Activated CD4-positive, alpha-beta T cell treated with anti-CD3 and anti-CD28 coated beads, Interleukin-2, amount 10 ng/mL, durations not matched to agents 7 days and 5 days (primary cell): ENCODE measurements at regions of chr2 and their contacts with region 1.

Region 1: DNA sequence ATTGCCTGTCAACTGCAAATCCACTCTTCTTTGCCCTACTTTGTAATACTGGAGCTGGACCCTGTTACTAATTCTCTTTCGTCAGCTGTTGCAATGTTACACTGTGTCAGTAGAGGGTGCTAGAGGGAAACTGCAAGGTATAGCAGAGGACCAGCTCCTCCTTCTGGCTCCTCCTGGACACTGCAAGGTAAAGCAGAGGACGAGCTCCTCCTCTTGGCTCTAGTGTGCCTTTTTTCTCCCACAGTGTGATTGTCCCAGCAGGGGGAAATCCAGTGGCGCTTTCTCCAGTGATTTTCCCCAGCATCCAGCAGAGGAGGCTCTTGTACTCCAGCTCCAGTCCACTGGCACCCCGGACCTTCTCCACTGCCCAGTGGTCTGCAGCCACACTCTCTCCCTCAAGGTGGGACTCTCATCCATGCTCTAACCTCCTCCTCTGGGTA is 95.6 kb downstream of the CAPN13 start:
- DNase-seq: peak; percentile 93
- H3K4me3 Mint-ChIP-seq: no peak overlapping the region
- H3K27ac Mint-ChIP-seq: no peak overlapping the region
- H3K4me1 Mint-ChIP-seq: peaks cover 6% of the 10 kb centered on the region
- H3K27me3 Mint-ChIP-seq: no peaks in the 10 kb centered on the region

Region 2: GRCh38 chr2:30146438-30147147 is 565.1 kb before region 1 on chr2 and contains the start of gene YPEL5:
- CTCF ChIA-PET with region 1: interaction called, 37 read pairs
- POLR2A ChIA-PET with region 1: no interaction called
- DNase-seq: peak; percentile 99
- H3K4me3 Mint-ChIP-seq: peak within 1 kb of the TSS; percentile 81
- H3K27ac Mint-ChIP-seq: peak within 1 kb of the TSS; percentile 99
- H3K4me1 Mint-ChIP-seq: peaks cover 44% of the 10 kb centered on the region
- H3K27me3 Mint-ChIP-seq: no peaks in the 10 kb centered on the region
- total RNA-seq, gene YPEL5: 32.3 to 39.2 TPM

Region 3: GRCh38 chr2:30180226-30180625 is 531.4 kb before region 1 on chr2:
- CTCF ChIA-PET with region 1: interaction called, 10 read pairs
- POLR2A ChIA-PET with region 1: no interaction called
- DNase-seq: no peak
- H3K4me3 Mint-ChIP-seq: no peak overlapping the region
- H3K27ac Mint-ChIP-seq: no peak overlapping the region
- H3K4me1 Mint-ChIP-seq: peaks cover 2% of the 10 kb centered on the region
- H3K27me3 Mint-ChIP-seq: no peaks in the 10 kb centered on the region

Region 4: DNA sequence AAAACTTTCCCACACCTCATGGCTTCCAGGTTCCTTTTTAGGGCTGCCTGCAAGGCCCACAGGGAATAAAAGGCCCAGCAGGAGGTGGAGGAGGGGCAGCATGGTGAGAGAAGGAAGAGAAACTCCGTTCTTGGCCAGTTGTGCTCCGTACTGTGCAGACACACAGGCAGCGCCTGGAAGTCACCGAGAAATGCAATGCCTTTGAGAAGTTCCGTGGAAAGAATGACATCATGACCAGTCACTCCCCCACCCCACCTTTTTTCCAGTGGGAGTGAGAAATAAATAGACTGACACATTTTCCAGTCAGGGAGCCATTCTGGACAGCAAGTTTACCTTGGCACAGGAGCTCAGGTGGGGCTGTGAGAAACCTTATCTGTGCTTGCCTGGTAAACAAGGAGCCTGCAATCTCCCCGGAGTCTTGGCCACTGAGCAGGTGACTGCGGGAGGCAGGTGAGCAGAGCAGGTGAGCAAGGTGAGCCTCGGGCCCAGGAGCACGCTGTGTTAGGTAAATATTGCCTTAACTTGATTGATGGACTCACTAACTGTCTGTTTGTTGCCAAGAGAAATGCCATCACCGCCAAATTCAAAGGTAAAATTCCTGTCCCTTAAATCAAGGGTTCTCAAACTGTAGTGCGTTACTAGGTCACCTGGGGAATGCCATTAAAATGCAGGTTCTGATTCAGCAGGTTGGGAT is 493.9 kb before region 1 on chr2:
- CTCF ChIA-PET with region 1: interaction called, 31 read pairs
- POLR2A ChIA-PET with region 1: no interaction called
- DNase-seq: no peak
- H3K4me3 Mint-ChIP-seq: no peak overlapping the region
- H3K27ac Mint-ChIP-seq: no peak overlapping the region
- H3K4me1 Mint-ChIP-seq: peaks cover 13% of the 10 kb centered on the region
- H3K27me3 Mint-ChIP-seq: peaks cover 3% of the 10 kb centered on the region

Region 5: DNA sequence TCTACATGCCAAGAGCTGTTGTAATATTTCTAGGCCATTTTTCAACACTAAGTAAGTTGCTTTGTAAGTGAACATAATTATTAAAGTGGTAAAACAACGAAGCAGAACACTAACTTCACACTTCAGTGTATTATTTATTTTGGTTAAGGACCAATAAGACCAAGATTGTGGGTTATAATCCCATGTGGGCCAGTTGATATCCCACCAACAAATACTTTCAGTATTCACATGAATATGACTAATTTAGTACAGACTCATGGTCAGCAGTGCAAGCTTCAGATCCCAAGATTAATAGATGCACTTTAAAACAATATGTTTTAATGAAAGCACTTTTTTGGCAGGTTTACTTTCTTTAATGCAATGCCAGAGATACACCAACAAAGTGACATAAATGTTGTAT is 110.3 kb before region 1 on chr2:
- CTCF ChIA-PET with region 1: no interaction called
- POLR2A ChIA-PET with region 1: no interaction called
- DNase-seq: no peak
- H3K4me3 Mint-ChIP-seq: no peak overlapping the region
- H3K27ac Mint-ChIP-seq: no peak overlapping the region
- H3K4me1 Mint-ChIP-seq: no peaks in the 10 kb centered on the region
- H3K27me3 Mint-ChIP-seq: no peaks in the 10 kb centered on the region

Region 6: DNA sequence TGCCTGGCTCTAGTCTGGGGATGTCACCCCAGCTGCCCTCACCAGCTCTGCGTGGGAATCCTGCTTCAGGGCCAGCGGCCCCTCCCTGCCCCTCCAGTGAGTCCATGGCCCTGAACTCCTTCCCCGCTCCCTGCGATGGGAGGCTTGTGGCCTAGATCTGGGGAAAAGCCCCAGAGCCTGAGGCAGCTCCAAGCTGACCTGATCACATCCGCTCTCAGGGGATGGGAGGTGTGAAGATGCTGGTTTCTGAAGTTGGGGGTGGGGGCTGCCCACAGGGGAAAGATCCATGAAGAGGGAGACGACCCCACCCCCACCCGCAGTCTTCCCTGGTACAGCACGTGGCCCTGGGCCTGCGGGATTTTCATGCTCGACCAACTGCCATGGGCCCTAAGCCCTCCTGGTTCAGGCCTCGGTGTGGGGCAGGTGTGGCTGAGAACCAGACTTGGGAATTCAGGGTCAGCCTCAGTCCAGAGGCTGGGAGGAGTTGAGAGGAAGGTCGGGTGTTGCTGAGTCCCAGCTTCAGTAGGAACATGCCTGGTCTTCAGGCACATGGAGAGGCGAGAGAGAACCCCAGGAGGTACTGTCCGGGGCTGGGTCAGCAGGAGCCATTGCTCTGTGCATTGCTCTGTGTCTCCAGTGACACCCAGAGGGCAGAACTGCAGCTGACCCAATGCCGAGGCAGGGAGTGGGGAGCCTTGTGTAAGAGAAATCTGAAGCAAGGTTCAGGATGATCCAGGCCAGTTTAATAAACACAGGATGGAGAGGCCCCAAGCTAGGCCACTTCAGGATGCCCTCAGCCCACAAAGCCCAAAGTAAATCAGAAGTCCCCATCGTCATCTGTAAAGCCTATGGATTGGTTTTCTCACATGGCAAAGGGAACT is 19.5 kb before region 1 on chr2:
- CTCF ChIA-PET with region 1: interaction called, 29 read pairs
- POLR2A ChIA-PET with region 1: no interaction called
- DNase-seq: no peak
- H3K4me3 Mint-ChIP-seq: no peak overlapping the region
- H3K27ac Mint-ChIP-seq: no peak overlapping the region
- H3K4me1 Mint-ChIP-seq: no peaks in the 10 kb centered on the region
- H3K27me3 Mint-ChIP-seq: no peaks in the 10 kb centered on the region

Region 7: DNA sequence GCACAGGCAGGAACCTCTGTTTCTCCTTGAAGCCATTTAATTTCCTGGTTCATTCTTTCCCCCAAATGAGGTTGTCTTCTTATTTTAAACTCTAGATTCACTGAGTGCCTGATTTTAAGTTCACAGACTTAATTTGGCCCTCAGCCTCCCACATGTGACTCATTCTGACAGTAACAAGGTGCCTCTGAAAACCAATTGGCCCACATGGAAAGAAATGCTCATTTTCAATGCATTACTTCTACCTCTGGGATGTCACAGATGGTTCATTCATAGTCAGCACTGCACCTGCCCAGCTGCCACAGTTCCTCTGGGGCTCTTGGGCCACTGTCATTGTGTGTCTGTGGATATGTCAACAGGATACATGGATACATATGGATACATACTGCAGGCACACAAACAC is 236.0 kb after region 1 on chr2:
- CTCF ChIA-PET with region 1: no interaction called
- POLR2A ChIA-PET with region 1: no interaction called
- DNase-seq: no peak
- H3K4me3 Mint-ChIP-seq: no peak overlapping the region
- H3K27ac Mint-ChIP-seq: no peak overlapping the region
- H3K4me1 Mint-ChIP-seq: no peaks in the 10 kb centered on the region
- H3K27me3 Mint-ChIP-seq: no peaks in the 10 kb centered on the region

Region 8: DNA sequence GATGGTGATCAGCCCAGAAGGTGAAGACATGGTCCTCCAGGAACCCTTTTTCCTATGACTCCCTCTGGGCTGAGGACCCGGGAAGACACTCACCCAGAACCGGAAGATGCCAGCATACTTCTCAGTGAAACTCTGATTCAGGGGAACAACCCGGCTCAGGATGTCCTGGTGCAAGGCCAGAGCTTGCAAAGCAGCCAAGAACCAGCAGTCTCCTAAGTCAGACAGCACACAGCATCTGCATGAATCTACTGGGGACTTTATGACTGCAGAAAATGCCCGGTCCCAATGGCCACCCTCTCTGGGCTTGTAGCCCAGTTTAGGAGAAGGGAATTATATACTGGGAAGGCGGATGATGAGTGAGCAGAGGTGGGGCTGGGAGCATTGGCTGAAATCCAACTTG is 490.4 kb after region 1 on chr2:
- CTCF ChIA-PET with region 1: no interaction called
- POLR2A ChIA-PET with region 1: no interaction called
- DNase-seq: no peak
- H3K4me3 Mint-ChIP-seq: no peak overlapping the region
- H3K27ac Mint-ChIP-seq: no peak overlapping the region
- H3K4me1 Mint-ChIP-seq: no peaks in the 10 kb centered on the region
- H3K27me3 Mint-ChIP-seq: no peaks in the 10 kb centered on the region

Region 9: GRCh38 chr2:31328026-31328425 is 616.4 kb after region 1 on chr2:
- CTCF ChIA-PET with region 1: interaction called, 20 read pairs
- POLR2A ChIA-PET with region 1: no interaction called
- DNase-seq: no peak
- H3K4me3 Mint-ChIP-seq: no peak overlapping the region
- H3K27ac Mint-ChIP-seq: no peak overlapping the region
- H3K4me1 Mint-ChIP-seq: peaks cover 21% of the 10 kb centered on the region
- H3K27me3 Mint-ChIP-seq: peaks cover 6% of the 10 kb centered on the region